Psoas muscle (tissue), 8 donors: ENCODE measurements at regions of chr3 and their contacts with region 1.

Region 1: GRCh38 chr3:188133219-188133618 is 20.7 kb upstream of the LPP start:
- DNase-seq: no peak
- ATAC-seq: peak; percentile 30 to 78 (median 50)
- H3K4me3 ChIP-seq: no peak overlapping the region
- H3K27ac ChIP-seq: no peak overlapping the region
- H3K4me1 ChIP-seq: peaks cover 3% of the 10 kb centered on the region
- H3K27me3 ChIP-seq: no peaks in the 10 kb centered on the region
- CTCF ChIP-seq: no peak

Region 2: GRCh38 chr3:188092648-188093047 is 40.6 kb before region 1 on chr3:
- intact Hi-C with region 1: loop called in 1 of 2 experiments (anchors 5 kb)
- DNase-seq: no peak
- ATAC-seq: peak in 1 of 4 donors; percentile 42
- H3K4me3 ChIP-seq: no peak overlapping the region
- H3K27ac ChIP-seq: no peak overlapping the region
- H3K4me1 ChIP-seq: no peaks in the 10 kb centered on the region
- H3K27me3 ChIP-seq: no peaks in the 10 kb centered on the region
- CTCF ChIP-seq: no peak